ENCODE measurements at regions of chr6 and their contacts with region 1.

Region 1: DNA sequence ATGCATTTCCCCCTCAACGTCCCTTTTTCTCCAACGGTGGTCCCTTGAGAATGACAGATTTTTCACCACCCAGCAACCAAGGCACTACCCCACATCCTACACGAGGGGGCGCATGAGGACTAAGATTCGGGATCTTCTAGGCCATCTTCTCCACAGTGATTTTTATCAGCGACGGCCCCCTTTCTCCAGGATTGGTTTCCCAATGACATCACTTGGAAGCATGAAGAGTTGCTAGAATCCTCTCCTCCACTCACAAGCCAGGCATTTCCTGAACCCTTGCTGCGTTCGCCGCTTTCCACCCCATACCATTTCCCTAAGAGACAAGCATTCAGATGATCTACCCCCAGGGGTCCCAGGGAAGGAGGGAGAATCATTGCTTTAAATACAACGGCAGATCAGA is 252.0 kb downstream of the HIVEP2 start:
- DNase-seq: peak; percentile 42
- ATAC-seq: peak; percentile 89
- H3K4me3 Mint-ChIP-seq: no peak overlapping the region
- H3K27ac Mint-ChIP-seq: no peak overlapping the region
- H3K4me1 Mint-ChIP-seq: peaks cover 6% of the 10 kb centered on the region
- H3K27me3 Mint-ChIP-seq: no peaks in the 10 kb centered on the region
- CTCF ChIP-seq: peak; percentile 18

Region 2: DNA sequence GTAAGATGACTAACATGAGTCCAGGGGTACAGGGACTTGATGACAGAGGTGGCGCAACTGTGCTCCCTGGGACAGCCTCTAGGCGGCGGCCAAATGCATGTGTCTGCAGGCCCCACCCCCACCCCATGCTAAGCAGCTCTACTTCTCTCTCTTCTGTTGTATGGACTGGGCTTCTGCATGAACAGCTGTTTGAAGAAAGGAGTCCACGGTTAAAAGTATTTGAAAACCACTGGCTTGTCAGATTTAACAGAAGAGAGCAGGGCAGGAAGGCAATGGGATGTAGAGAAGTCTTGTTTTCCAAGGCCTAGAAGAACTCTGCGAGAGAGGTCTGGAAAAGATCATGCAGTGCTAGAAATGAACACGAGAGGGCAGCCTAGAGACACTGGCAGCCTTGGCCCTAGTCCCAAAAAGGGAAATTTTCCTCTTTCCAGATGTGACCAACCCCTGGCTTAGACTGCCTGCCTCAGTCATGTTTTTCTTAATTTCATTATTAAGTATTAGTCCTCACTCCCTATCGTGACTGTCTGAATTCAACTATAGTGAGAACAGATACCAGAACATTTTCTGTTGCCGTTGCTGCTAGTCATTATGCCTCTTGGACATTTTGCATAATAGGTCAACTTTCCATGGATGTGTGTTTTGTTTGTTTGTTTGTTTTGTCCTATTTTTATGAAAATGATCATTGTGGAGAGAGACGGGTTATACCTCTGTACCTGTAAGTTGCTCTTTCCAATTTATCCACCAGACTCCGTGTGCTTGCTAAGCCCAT is 126.1 kb before region 1 on chr6:
- CTCF ChIA-PET with region 1: interaction called, 4 read pairs
- POLR2A ChIA-PET with region 1: no interaction called
- intact Hi-C with region 1: loop called (anchors 1 kb)
- DNase-seq: no peak
- ATAC-seq: peak; percentile 66
- H3K4me3 Mint-ChIP-seq: no peak overlapping the region
- H3K27ac Mint-ChIP-seq: no peak overlapping the region
- H3K4me1 Mint-ChIP-seq: no peaks in the 10 kb centered on the region
- H3K27me3 Mint-ChIP-seq: no peaks in the 10 kb centered on the region
- CTCF ChIP-seq: peak; percentile 79

Region 3: GRCh38 chr6:143026696-143027449 is 333.9 kb after region 1 on chr6:
- CTCF ChIA-PET with region 1: interaction called, 96 read pairs
- POLR2A ChIA-PET with region 1: interaction called, 5 read pairs
- intact Hi-C with region 1: loop called (anchors 1 kb)
- DNase-seq: peak; percentile 26
- ATAC-seq: peak; percentile 68
- H3K4me3 Mint-ChIP-seq: no peak overlapping the region
- H3K27ac Mint-ChIP-seq: no peak overlapping the region
- H3K4me1 Mint-ChIP-seq: peaks cover 5% of the 10 kb centered on the region
- H3K27me3 Mint-ChIP-seq: no peaks in the 10 kb centered on the region
- CTCF ChIP-seq: no peak

Region 4: DNA sequence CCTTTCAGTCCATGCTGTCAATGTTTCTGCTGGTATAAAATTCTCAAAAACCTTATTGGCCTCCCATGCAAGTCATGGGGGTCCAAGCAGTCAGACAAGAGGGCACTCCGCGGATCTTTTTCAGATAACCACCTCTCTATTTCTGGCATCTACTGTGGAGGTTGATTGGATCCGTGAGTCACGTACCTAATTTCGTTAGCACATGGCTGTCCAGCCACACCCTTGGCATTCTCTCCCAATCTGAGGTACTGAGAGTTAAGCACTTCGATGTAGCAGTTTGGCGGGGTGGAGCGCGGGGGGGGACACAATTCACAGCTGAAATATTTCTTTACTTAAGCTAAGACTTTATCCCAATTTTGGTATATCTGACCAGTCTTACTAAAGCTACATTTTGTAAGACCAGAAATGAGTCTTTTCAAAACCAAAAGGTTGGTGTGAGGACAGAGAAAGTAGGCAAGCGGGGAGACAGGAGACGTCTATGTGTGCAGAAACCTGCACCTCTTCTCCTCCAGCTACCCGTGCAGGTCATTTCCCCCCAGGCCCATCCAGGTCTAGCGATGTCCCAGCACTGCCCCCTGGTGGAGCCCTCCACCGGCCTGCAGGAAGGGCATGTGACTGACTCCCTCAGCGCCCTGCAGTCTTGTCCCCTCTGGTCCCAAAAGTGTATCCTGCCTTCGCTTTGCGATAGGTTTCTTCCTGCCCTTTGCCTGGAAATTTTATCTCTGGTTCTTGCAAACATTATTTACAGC is 644.4 kb after region 1 on chr6:
- CTCF ChIA-PET with region 1: interaction called, 43 read pairs
- POLR2A ChIA-PET with region 1: no interaction called
- intact Hi-C with region 1: loop called (anchors 1 kb)
- DNase-seq: peak; percentile 32
- ATAC-seq: no peak
- H3K4me3 Mint-ChIP-seq: no peak overlapping the region
- H3K27ac Mint-ChIP-seq: no peak overlapping the region
- H3K4me1 Mint-ChIP-seq: no peaks in the 10 kb centered on the region
- H3K27me3 Mint-ChIP-seq: no peaks in the 10 kb centered on the region
- CTCF ChIP-seq: no peak

Region 5: DNA sequence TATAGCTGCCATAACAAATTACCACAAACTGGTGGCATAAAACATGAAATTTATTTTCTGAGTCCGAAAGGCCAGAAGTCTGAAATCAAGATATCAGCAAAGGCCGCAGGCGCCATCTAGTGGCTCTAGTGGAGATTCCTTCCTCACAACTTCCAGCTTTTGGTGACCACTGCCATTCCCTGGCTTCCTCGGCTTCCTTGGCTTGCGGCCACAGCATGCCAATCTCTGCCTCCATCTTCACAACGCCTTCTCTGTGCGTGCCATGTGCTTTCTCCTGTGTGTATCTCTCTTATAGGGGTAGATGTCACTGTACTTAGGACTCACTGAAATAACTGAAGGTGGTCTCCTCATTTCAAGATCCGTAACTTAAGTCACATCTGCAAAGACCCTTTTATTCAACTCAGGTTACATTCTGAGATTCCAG is 1320.6 kb after region 1 on chr6:
- CTCF ChIA-PET with region 1: no interaction called
- POLR2A ChIA-PET with region 1: no interaction called
- intact Hi-C with region 1: loop called (anchors 1 kb)
- DNase-seq: peak; percentile 28
- ATAC-seq: peak; percentile 31
- H3K4me3 Mint-ChIP-seq: no peak overlapping the region
- H3K27ac Mint-ChIP-seq: no peak overlapping the region
- H3K4me1 Mint-ChIP-seq: peaks cover 2% of the 10 kb centered on the region
- H3K27me3 Mint-ChIP-seq: no peaks in the 10 kb centered on the region
- CTCF ChIP-seq: peak; percentile 90

Measured in activated B cell treated with CpG ODN at 0.5 μM for 24 hours (primary cell).